Endothelial cell of umbilical vein (primary cell): ENCODE measurements at regions of chr9 and their contacts with region 1.

Region 1: GRCh38 chr9:112224401-112225289 is 49.5 kb upstream of the SUSD1 start:
- DNase-seq: no peak
- H3K4me3 ChIP-seq: no peak overlapping the region
- H3K27ac ChIP-seq: no peak overlapping the region
- H3K4me1 ChIP-seq: no peaks in the 10 kb centered on the region
- H3K27me3 ChIP-seq: no peaks in the 10 kb centered on the region
- CTCF ChIP-seq: no peak
- POLR2A ChIP-seq: no peak

Region 2: GRCh38 chr9:112212926-112213325 is 11.7 kb before region 1 on chr9:
- CTCF ChIA-PET with region 1: interaction called, 10 read pairs
- POLR2A ChIA-PET with region 1: no interaction called
- dilution Hi-C with region 1: no loop called
- intact Hi-C with region 1: no loop called
- DNase-seq: no peak
- H3K4me3 ChIP-seq: no peak overlapping the region
- H3K27ac ChIP-seq: no peak overlapping the region
- H3K4me1 ChIP-seq: no peaks in the 10 kb centered on the region
- H3K27me3 ChIP-seq: no peaks in the 10 kb centered on the region
- CTCF ChIP-seq: no peak
- POLR2A ChIP-seq: no peak

Region 3: DNA sequence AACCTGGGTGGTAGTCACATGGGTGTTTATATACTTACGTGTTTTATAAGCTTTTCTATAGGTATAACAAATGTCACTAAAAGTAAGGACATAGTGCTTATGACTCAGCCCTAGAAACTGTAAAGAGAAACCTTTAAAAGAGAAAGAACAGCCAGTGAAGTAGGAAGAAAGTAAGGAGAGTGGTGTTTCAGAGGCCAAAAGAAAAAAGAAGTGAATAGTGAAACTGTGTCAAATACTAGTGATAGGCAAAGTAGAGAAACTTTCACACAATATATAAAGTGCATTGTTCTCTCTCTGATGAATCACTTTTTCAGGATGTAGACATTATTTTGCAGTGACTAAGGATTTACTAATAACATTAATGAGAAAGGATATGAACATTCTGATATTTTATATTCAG is 24.6 kb after region 1 on chr9:
- CTCF ChIA-PET with region 1: no interaction called
- POLR2A ChIA-PET with region 1: no interaction called
- dilution Hi-C with region 1: no loop called
- intact Hi-C with region 1: no loop called
- DNase-seq: peak; percentile 85
- H3K4me3 ChIP-seq: peak overlapping the region in 2 of 3 experiments; percentile 41 to 73
- H3K27ac ChIP-seq: peak overlapping the region; percentile 92
- H3K4me1 ChIP-seq: peaks cover 34% of the 10 kb centered on the region
- H3K27me3 ChIP-seq: no peaks in the 10 kb centered on the region
- CTCF ChIP-seq: no peak
- POLR2A ChIP-seq: no peak

Region 4: GRCh38 chr9:112421771-112422222 is 197.2 kb after region 1 on chr9:
- CTCF ChIA-PET with region 1: no interaction called
- POLR2A ChIA-PET with region 1: no interaction called
- dilution Hi-C with region 1: no loop called
- intact Hi-C with region 1: no loop called
- DNase-seq: no peak
- H3K4me3 ChIP-seq: no peak overlapping the region
- H3K27ac ChIP-seq: no peak overlapping the region
- H3K4me1 ChIP-seq: no peaks in the 10 kb centered on the region
- H3K27me3 ChIP-seq: no peaks in the 10 kb centered on the region
- CTCF ChIP-seq: no peak
- POLR2A ChIP-seq: no peak